GM10248 (cell line): ENCODE measurements at regions of chr5 and their contacts with region 1.

Region 1: GRCh38 chr5:141960449-141961202 is 2.6 kb upstream of the PCDH12 start:
- DNase-seq: peak; percentile 87
- CTCF ChIP-seq: peak; percentile 87

Region 2: DNA sequence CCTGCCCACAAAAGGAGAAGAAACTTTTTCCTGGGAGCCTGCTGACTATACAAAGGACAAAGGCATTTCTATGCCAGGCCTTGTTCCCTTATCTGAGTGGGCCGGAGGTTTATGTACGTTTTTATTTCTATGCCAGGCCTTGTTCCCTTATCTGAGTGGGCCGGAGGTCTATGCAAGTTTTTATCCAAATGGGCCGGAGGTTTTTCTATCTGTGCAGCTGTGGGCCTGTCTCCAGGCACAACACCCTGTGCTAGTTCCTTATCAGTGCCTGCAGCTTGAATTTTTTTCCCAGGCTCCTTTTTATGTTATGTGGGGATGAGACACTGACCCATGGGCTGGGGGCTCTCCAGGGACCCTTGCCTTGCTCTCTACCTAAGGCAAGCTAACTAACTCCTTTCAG is 662.2 kb before region 1 on chr5:
- CTCF ChIA-PET with region 1: no interaction called
- POLR2A ChIA-PET with region 1: no interaction called
- DNase-seq: no peak
- CTCF ChIP-seq: no peak

Region 3: DNA sequence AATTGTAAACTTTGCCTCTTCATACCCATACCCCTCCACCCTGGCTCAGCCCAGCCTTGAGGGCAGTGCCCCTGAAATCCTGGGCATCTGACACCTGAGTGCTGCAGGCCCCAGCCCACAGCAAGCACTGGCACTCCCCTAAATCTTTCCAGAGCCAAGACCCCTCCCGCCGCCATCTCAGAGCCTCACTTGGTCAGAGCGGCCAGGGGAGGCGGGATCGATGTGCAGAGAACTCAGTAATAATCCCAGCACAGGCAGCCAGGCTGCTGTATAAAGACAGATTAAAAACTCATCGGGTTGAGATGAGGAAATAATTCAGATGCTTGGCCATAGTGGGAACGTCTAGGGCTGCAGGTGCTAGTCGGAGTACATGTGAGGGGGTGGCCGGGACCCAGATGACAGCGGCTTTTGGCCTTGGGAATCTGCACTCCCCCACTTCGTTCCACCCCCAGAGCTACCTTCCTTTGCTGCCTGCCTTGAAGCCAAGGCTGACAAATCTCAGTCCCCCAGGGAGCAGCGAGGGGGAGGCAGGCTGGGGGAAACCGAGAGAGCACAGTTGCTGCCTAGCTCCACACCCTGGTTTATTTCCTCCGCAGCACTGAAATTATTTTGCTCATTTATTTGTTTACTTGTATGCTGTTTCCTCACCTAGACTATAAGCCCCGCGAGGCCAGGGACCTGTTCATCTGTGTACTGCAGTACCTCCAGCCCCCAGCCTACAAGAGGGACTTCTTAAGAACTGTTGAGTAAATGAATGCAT is 259.1 kb before region 1 on chr5:
- CTCF ChIA-PET with region 1: interaction called, 67 read pairs
- POLR2A ChIA-PET with region 1: no interaction called
- DNase-seq: peak; percentile 54
- CTCF ChIP-seq: no peak

Region 4: GRCh38 chr5:141914199-141914743 is 46.4 kb before region 1 on chr5:
- CTCF ChIA-PET with region 1: interaction called, 17 read pairs
- POLR2A ChIA-PET with region 1: no interaction called
- DNase-seq: peak; percentile 66
- CTCF ChIP-seq: peak; percentile 29

Region 5: GRCh38 chr5:141934099-141934844 is 26.4 kb before region 1 on chr5:
- CTCF ChIA-PET with region 1: interaction called, 68 read pairs
- POLR2A ChIA-PET with region 1: no interaction called
- DNase-seq: no peak
- CTCF ChIP-seq: no peak

Region 6: GRCh38 chr5:141976176-141976575 is 15.6 kb after region 1 on chr5:
- CTCF ChIA-PET with region 1: interaction called, 145 read pairs
- POLR2A ChIA-PET with region 1: no interaction called
- DNase-seq: no peak
- CTCF ChIP-seq: no peak

Region 7: GRCh38 chr5:142012792-142013388 is 52.3 kb after region 1 on chr5 and contains the start of gene GNPDA1:
- CTCF ChIA-PET with region 1: interaction called, 28 read pairs
- POLR2A ChIA-PET with region 1: no interaction called
- DNase-seq: peak; percentile 87
- CTCF ChIP-seq: no peak